GM12878 (cell line): ENCODE measurements at regions of chr22 and their contacts with region 1.

Region 1: DNA sequence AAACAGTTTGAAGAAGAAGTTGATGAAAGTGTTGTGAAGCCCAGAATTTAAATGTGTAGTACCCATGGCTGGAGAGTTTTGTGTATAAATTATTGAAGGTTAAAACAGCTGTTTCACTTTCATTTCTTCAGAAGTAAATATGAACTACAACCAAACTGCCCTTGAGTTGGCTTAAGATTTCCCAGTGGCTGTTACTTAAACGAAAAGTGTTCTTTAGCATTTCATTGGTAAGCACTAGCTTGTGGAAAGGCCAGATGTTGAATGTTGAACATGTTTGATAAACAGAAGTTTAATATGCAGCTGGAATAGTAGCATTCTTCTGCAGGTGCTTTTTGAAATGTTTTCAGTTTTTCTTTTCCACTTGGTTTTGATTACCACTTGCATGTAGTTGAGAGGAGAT is 83.2 kb upstream of the TNRC6B start:
- DNase-seq: peak; percentile 15
- ATAC-seq: peak; percentile 67
- H3K4me3 ChIP-seq: peak overlapping the region; percentile 49; the same call in 1 of the 2 replicates
- H3K27ac ChIP-seq: peak overlapping the region; percentile 30; the same call in 1 of the 2 replicates
- H3K4me1 ChIP-seq: no peaks in the 10 kb centered on the region; the same call in 1 of the 2 replicates
- H3K27me3 ChIP-seq: no peaks in the 10 kb centered on the region
- CTCF ChIP-seq: no peak
- EP300 ChIP-seq: no peak
- POLR2A ChIP-seq: no peak
- RAD21 ChIP-seq: no peak

Region 2: DNA sequence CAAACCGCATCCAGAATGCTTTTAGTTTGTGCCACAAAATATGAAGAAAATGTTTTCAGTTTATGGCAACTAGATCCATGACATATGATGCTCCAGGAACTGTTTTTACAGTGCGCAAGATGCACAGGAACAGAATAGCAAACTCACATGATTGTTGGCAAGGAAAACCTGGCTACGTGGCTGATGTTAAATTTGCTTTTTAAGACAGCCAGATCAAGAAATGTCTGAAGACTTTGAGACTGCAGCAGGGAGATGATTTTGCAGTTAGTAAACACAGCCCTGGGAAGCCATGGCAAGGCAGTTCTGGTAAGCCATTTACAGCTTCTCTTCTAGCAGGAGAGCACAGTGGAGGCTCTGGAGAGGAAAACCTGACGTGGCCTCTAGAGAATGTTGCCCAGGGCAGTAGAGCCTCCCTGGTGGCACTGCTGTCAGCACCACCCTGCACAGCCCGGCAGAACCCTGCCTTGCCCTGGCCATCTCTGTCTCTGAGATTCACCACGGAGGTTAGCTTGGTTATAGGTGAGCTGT is 13.4 kb after region 1 on chr22:
- CTCF ChIA-PET with region 1: interaction called, 4 read pairs
- POLR2A ChIA-PET with region 1: no interaction called
- RAD21 ChIA-PET with region 1: no interaction called
- SMC1A ChIA-PET with region 1: interaction called, 15 read pairs
- in situ Hi-C with region 1: no loop called
- intact Hi-C with region 1: no loop called
- DNase-seq: no peak
- ATAC-seq: no peak; the same call in 2 of the 3 replicates
- H3K4me3 ChIP-seq: no peak overlapping the region
- H3K27ac ChIP-seq: peak overlapping the region; percentile 34; the same call in 1 of the 2 replicates
- H3K4me1 ChIP-seq: peaks cover 7% of the 10 kb centered on the region
- H3K27me3 ChIP-seq: no peaks in the 10 kb centered on the region
- CTCF ChIP-seq: no peak
- EP300 ChIP-seq: no peak
- POLR2A ChIP-seq: no peak
- RAD21 ChIP-seq: no peak

Region 3: DNA sequence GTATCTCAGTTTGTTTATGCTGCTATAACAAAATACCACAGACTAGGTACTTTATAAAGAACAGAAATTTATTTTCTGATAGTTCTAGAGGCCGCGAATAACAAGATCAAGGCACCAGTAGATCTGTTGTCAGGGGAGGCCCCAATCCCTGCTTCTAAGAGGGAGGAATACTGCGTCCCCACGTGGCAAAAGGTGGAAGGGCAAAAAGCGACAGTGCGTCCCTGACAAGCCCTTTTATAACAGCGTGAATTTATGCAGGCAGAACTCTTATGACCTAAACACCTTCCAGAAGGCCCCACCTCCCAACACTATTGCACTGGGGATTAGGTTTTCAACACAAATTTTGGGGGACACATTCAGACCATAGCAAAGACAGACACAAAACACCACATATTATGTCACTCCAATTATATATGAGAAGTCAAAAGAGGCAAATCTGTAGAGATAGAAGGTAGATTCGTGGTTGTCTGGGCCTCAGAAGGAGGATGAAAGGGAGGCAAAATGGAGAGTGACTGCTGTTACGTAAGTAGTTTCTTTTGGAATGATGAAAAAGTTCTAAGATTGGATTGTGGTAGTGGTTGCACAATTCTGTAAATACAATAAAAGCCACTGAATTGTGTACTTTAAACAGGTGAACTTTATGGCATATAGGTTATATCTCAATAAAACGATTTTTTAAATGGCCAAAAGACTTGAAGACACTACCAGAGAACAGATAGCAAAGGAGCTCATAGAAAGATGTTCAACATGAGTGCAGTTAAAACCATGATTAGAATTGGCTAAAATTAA is 53.1 kb after region 1 on chr22:
- CTCF ChIA-PET with region 1: no interaction called
- POLR2A ChIA-PET with region 1: no interaction called
- RAD21 ChIA-PET with region 1: no interaction called
- SMC1A ChIA-PET with region 1: no interaction called
- in situ Hi-C with region 1: no loop called
- intact Hi-C with region 1: no loop called
- DNase-seq: no peak
- ATAC-seq: no peak
- H3K4me3 ChIP-seq: no peak overlapping the region
- H3K27ac ChIP-seq: no peak overlapping the region
- H3K4me1 ChIP-seq: no peaks in the 10 kb centered on the region
- H3K27me3 ChIP-seq: no peaks in the 10 kb centered on the region
- CTCF ChIP-seq: no peak
- EP300 ChIP-seq: no peak
- POLR2A ChIP-seq: no peak
- RAD21 ChIP-seq: no peak

Region 4: DNA sequence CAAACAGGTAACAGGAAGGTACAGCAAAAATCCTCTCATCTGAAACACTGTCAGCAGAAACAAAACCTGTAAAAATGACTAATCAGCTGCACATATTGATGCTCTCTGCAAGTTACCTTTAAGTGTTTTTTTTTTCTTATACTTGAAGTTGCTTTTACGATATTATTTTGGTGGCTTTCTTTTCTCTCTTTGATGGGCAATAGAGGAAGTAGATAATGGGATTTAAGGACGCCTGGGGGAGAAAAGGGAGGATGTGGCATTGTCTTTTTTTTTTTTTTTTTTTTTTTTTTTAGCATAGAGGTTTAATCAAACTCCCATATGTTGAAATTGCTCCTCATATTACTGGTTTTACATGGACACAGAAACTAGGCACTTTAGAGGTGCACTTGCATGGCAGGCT is 240.4 kb after region 1 on chr22:
- CTCF ChIA-PET with region 1: no interaction called
- POLR2A ChIA-PET with region 1: no interaction called
- RAD21 ChIA-PET with region 1: no interaction called
- SMC1A ChIA-PET with region 1: no interaction called
- in situ Hi-C with region 1: no loop called
- intact Hi-C with region 1: no loop called
- DNase-seq: no peak
- ATAC-seq: no peak
- H3K4me3 ChIP-seq: no peak overlapping the region
- H3K27ac ChIP-seq: no peak overlapping the region
- H3K4me1 ChIP-seq: peaks cover 36% of the 10 kb centered on the region
- H3K27me3 ChIP-seq: no peaks in the 10 kb centered on the region
- CTCF ChIP-seq: no peak
- EP300 ChIP-seq: no peak
- POLR2A ChIP-seq: no peak
- RAD21 ChIP-seq: no peak